ENCODE measurements at regions of chr7 and their contacts with region 1.

Region 1: DNA sequence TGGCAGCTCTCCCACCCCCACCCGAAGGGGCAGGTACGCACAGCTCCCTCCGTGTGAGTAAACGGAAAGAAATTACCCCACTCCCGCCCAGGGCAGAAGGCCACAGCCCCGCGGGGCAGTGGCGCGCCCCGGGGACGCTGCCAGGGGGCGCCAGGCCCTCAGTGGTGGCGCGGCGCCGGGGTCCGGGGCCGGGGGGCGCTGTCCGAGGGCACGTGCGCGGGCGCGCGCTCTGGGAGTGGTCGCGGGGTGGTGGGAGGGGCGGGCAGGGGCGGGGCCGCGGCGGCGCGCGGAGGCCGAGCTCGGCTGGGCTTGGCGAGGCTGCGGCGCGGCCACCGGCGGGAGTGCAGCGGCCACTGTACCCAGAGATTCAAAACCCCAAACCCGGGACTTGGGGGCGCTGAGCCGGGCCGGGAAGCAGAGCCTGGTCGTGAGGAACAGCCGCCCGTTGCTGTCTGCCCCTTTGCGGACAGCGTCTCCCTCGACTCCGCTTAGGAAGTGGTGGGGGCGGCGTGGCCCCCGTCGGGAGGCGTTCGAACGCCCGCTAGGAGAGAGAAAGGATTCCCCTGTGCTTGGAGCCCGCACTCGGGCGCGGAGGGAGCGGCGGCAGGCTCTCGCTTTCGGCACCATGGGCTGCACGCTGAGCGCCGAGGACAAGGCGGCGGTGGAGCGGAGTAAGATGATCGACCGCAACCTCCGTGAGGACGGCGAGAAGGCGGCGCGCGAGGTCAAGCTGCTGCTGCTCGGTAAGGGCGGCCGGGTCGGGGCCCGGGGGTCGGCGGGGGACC is at the start of gene GNAI1:
- DNase-seq: no peak
- H3K4me3 Mint-ChIP-seq: peak within 1 kb of the TSS; percentile 85
- H3K27ac Mint-ChIP-seq: peak within 1 kb of the TSS; percentile 53
- H3K4me1 Mint-ChIP-seq: peaks cover 30% of the 10 kb centered on the region
- H3K27me3 Mint-ChIP-seq: peaks cover 56% of the 10 kb centered on the region
- total RNA-seq, gene GNAI1: 5.3 and 6.0 TPM in 2 replicates

Region 2: GRCh38 chr7:80095545-80095944 is 39.2 kb before region 1 on chr7:
- intact Hi-C with region 1: loop called (anchors 2 kb)
- DNase-seq: no peak
- H3K4me3 Mint-ChIP-seq: no peak overlapping the region
- H3K27ac Mint-ChIP-seq: no peak overlapping the region
- H3K4me1 Mint-ChIP-seq: no peaks in the 10 kb centered on the region
- H3K27me3 Mint-ChIP-seq: no peaks in the 10 kb centered on the region

Region 3: GRCh38 chr7:80175744-80176143 is 41.0 kb after region 1 on chr7:
- intact Hi-C with region 1: loop called (anchors 1 kb)
- DNase-seq: no peak
- H3K4me3 Mint-ChIP-seq: no peak overlapping the region
- H3K27ac Mint-ChIP-seq: no peak overlapping the region
- H3K4me1 Mint-ChIP-seq: peaks cover 16% of the 10 kb centered on the region
- H3K27me3 Mint-ChIP-seq: no peaks in the 10 kb centered on the region

Region 4: GRCh38 chr7:80307227-80307856 is 172.6 kb after region 1 on chr7:
- intact Hi-C with region 1: loop called (anchors 5 kb)
- DNase-seq: no peak
- H3K4me3 Mint-ChIP-seq: no peak overlapping the region
- H3K27ac Mint-ChIP-seq: no peak overlapping the region
- H3K4me1 Mint-ChIP-seq: peaks cover 11% of the 10 kb centered on the region
- H3K27me3 Mint-ChIP-seq: no peaks in the 10 kb centered on the region

Region 5: GRCh38 chr7:80392229-80393169 is 257.8 kb after region 1 on chr7:
- intact Hi-C with region 1: loop called (anchors 5 kb)
- DNase-seq: no peak
- H3K4me3 Mint-ChIP-seq: no peak overlapping the region
- H3K27ac Mint-ChIP-seq: no peak overlapping the region
- H3K4me1 Mint-ChIP-seq: no peaks in the 10 kb centered on the region
- H3K27me3 Mint-ChIP-seq: no peaks in the 10 kb centered on the region